ENCODE measurements at regions of chr3 and their contacts with region 1.

Region 1: DNA sequence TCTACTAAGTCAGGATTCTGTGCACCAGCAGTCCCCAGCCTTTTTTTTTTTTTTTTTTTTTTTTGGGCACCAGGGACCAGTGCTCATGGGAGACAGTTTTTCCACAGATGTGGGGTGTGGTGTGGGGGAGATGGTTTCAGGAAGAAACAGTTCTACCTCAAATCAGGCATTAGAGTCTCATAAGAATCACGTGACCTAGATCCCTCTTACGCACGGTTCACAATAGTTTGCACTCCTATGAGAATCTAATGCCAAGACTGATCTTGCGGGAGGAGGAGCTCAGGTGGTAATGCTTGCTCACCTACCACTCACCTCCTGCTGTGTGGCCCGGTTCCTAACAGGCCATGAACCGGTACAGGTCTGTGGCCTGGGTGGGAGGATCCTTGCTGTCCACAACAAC is 88.8 kb downstream of the GADL1 start:
- DNase-seq: no peak
- ATAC-seq: no peak
- H3K4me3 ChIP-seq: no peak overlapping the region
- H3K27ac ChIP-seq: no peak overlapping the region
- H3K4me1 ChIP-seq: no peaks in the 10 kb centered on the region
- H3K27me3 ChIP-seq: no peaks in the 10 kb centered on the region

Region 2: DNA sequence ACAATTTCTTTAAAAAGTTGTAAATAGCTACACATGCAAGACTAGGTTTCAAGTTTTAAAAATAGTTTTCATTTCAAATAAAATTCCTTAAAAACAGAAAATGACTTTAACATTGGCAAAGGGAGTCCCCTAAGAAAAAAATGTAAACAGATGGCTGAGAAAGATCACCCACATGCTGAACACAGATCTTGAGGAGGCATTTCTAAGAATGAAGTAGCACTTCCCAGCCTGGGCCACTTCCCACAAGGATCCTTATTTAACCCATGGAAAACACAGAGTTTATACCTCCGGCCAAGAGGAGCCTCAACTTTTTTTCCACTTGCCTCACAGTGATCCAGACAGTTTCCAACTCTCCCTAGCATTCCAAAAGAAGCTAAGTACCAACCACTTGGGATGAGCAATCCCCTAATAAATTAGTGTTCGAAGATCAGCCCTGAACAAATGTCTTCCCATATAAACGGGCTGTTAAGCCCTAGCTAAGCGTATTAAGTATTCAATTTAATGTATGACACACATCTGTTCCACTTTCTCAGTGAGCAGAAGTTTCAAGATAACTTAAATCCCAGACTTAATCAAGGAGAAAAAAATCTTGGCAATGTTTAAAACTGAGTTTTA is 27.4 kb after region 1 on chr3:
- intact Hi-C with region 1: loop called in 1 of 4 experiments (anchors 2 kb)
- DNase-seq: no peak
- ATAC-seq: no peak
- H3K4me3 ChIP-seq: no peak overlapping the region
- H3K27ac ChIP-seq: no peak overlapping the region
- H3K4me1 ChIP-seq: no peaks in the 10 kb centered on the region
- H3K27me3 ChIP-seq: no peaks in the 10 kb centered on the region

Measured in right cardiac atrium (tissue), 5 donors.